ENCODE measurements at regions of chr14 and their contacts with region 1.

Region 1: GRCh38 chr14:92750994-92751400 is 2.6 kb upstream of the LGMN start:
- DNase-seq: no peak
- H3K4me3 ChIP-seq: no peak overlapping the region
- H3K27ac ChIP-seq: no peak overlapping the region
- H3K4me1 ChIP-seq: peaks cover 6 to 20% (median 18%) of the 10 kb centered on the region in 4 donors
- H3K27me3 ChIP-seq: no peaks in the 10 kb centered on the region
- CTCF ChIP-seq: no peak
- EP300 ChIP-seq: no peak
- POLR2A ChIP-seq: no peak

Region 2: GRCh38 chr14:92793709-92794546 is 42.9 kb after region 1 on chr14 and contains the start of gene GOLGA5:
- intact Hi-C with region 1: loop called (anchors 5 kb)
- DNase-seq: peak; percentile 99
- H3K4me3 ChIP-seq: peak within 1 kb of the TSS; percentile 72 to 94 (median 88)
- H3K27ac ChIP-seq: peak within 1 kb of the TSS; percentile 84 to 91 (median 90)
- H3K4me1 ChIP-seq: peaks cover 13 to 33% (median 25%) of the 10 kb centered on the region in 4 donors
- H3K27me3 ChIP-seq: no peaks in the 10 kb centered on the region
- CTCF ChIP-seq: peak in 2 of 3 experiments; percentile 5 to 32
- EP300 ChIP-seq: no peak
- POLR2A ChIP-seq: peak; percentile 46
- total RNA-seq, gene GOLGA5: 33.0 to 35.4 (median 34.3) TPM

Region 3: DNA sequence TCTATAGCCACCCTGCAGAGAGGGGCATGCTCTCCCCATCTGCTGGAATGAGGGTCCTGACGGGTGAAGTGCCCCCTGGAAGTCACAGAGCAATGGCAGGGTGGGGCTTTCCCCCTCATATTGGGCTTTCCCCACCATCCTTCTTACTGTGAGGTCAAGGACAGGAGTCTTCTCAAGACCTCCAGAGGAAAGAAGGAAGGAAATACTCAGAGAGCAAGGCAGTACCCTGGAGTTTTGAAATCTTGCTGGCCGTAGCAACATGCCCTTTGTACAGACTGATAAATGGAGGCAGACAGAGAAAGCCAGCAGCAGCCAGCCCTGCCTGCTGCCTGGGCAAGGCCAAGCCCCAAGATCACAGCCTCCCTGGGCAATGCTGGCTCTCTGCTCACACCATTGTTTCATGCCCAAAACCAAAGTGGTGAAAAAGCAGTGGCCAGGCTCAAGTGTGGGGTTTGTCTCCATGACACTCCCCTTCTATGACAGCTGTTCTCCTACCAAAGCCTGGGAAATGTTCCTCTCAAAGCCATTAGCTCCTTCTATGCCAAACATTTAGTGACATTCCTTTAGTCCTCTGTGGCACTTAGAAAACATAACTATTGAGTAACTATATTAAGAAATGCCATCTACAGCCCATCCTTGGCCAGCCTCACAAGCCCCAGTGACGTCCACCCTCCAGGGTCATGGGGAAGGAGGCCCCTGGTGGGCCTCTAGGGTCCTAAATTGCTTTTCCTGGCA is 377.9 kb after region 1 on chr14:
- intact Hi-C with region 1: no loop called
- DNase-seq: no peak
- H3K4me3 ChIP-seq: no peak overlapping the region
- H3K27ac ChIP-seq: peak overlapping the region in 1 of 4 donors; percentile 39
- H3K4me1 ChIP-seq: peaks cover 0 to 15% (median 3%) of the 10 kb centered on the region in 4 donors
- H3K27me3 ChIP-seq: no peaks in the 10 kb centered on the region
- CTCF ChIP-seq: no peak
- EP300 ChIP-seq: no peak
- POLR2A ChIP-seq: no peak

Measured in esophagus muscularis mucosa (tissue), 4 donors.